Transverse colon (tissue), 4 donors: ENCODE measurements at regions of chr12 and their contacts with region 1.

Region 1: GRCh38 chr12:129001-129400 is 62.4 kb downstream of the IQSEC3 start:
- DNase-seq: no peak
- H3K4me3 ChIP-seq: no peak overlapping the region
- H3K27ac ChIP-seq: no peak overlapping the region
- H3K4me1 ChIP-seq: no peaks in the 10 kb centered on the region
- H3K27me3 ChIP-seq: no peaks in the 10 kb centered on the region
- CTCF ChIP-seq: no peak
- EP300 ChIP-seq: no peak
- POLR2A ChIP-seq: no peak

Region 2: GRCh38 chr12:80681-81190 is 48.3 kb before region 1 on chr12:
- in situ Hi-C with region 1: no loop called
- intact Hi-C with region 1: loop called (anchors 1 kb)
- DNase-seq: no peak
- H3K4me3 ChIP-seq: no peak overlapping the region
- H3K27ac ChIP-seq: no peak overlapping the region
- H3K4me1 ChIP-seq: no peaks in the 10 kb centered on the region
- H3K27me3 ChIP-seq: peaks cover 58% of the 10 kb centered on the region
- CTCF ChIP-seq: no peak
- EP300 ChIP-seq: no peak
- POLR2A ChIP-seq: no peak

Region 3: DNA sequence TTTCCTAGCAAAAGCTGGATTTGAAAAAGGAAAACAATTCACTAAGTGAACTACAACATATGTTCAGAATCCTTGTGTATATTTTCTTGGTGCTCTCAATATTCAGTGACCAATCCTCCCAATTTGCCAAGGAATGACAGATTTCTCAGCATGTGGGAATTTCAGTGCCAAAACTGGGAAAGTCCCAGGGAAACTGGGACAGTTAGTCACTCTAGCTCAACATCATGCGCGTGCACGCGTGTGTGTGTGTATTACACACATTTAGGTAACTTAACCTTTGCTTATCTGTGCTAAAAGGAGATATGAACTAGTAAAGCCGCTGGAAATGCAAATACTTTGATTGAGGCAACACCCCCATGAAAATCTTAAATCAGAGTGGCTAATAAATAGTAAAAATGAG is 159.7 kb after region 1 on chr12:
- in situ Hi-C with region 1: no loop called
- intact Hi-C with region 1: no loop called
- DNase-seq: no peak
- H3K4me3 ChIP-seq: no peak overlapping the region
- H3K27ac ChIP-seq: no peak overlapping the region
- H3K4me1 ChIP-seq: no peaks in the 10 kb centered on the region
- H3K27me3 ChIP-seq: no peaks in the 10 kb centered on the region
- CTCF ChIP-seq: no peak
- EP300 ChIP-seq: no peak
- POLR2A ChIP-seq: no peak

Region 4: GRCh38 chr12:1380171-1380974 is 1251.4 kb after region 1 on chr12:
- in situ Hi-C with region 1: no loop called
- intact Hi-C with region 1: no loop called
- DNase-seq: no peak
- H3K4me3 ChIP-seq: no peak overlapping the region
- H3K27ac ChIP-seq: no peak overlapping the region
- H3K4me1 ChIP-seq: peaks cover 0 to 7% (median 0%) of the 10 kb centered on the region in 4 donors
- H3K27me3 ChIP-seq: no peaks in the 10 kb centered on the region
- CTCF ChIP-seq: no peak
- EP300 ChIP-seq: no peak
- POLR2A ChIP-seq: no peak